ENCODE measurements at regions of chr10 and their contacts with region 1.

Region 1: DNA sequence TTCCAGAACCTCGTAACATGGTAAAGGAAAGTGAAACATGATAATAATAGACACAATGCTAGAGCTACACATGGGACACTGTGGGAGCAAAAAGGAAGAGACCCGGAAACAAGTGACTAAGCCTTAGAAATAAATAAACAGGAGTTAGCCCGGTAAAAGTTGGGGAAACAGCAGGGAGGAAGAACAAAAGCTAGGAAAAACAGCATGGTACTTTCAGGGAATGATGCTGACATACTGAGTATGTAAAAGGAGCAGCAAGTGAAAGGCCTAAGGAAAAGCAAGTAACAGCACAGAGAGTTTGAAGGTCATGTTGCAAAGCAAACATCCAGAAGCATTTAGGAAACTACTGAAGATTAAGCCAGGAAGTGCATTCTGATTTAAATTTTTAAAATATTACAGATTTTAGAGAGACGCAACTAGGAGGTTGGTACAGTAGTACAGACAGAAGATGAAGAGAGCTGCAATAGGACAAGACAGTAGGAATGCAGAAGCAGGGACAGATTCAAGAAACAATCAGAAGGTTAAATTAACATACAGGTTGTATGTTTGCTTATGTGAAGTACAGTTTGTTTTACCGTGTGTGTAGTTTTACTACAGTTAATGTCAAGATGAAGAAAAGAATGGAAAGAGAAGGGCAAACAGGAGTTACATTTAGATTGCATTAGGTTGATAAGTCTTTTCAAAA is 63.7 kb downstream of the ARHGAP12 start:
- DNase-seq: no peak

Region 2: DNA sequence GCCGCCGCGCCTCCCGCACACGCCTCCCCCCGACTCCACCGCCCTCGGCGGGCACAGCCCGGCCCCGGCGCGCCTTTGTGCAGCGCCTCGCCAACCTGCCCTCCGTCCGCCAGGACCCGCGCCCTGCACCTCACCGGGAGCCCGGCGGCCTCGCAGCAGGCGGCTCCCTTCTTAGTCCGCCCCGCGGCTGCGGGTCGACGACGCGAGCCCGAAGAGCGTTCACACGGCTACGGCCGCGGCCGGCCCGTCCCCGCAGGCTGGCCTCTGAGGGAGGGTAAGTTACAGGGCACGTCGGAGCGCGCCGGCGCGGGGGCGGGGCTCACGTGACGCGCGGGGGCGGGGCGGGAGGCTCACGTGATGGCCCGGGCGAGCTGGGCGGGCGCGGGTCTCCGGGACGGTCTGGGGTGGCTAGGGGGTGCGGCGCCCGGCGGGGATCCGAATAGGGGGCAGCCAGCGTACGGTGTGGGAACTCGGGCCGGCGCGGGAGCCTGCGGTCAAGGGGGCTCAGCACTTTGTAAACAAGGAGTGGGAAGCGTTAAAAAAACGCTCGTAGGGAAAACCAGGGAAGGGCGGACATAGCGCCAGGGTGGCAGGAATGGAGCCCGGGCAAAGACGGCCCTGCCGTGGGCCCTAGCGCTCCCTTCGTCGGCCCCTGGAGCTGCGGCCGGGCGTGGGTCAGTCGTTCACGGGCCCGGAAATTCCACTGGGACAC is 63.7 kb after region 1 on chr10 and contains the start of gene ARHGAP12:
- intact Hi-C with region 1: loop called (anchors 2 kb)
- DNase-seq: peak; percentile 75 to 97 (median 82)

Region 3: DNA sequence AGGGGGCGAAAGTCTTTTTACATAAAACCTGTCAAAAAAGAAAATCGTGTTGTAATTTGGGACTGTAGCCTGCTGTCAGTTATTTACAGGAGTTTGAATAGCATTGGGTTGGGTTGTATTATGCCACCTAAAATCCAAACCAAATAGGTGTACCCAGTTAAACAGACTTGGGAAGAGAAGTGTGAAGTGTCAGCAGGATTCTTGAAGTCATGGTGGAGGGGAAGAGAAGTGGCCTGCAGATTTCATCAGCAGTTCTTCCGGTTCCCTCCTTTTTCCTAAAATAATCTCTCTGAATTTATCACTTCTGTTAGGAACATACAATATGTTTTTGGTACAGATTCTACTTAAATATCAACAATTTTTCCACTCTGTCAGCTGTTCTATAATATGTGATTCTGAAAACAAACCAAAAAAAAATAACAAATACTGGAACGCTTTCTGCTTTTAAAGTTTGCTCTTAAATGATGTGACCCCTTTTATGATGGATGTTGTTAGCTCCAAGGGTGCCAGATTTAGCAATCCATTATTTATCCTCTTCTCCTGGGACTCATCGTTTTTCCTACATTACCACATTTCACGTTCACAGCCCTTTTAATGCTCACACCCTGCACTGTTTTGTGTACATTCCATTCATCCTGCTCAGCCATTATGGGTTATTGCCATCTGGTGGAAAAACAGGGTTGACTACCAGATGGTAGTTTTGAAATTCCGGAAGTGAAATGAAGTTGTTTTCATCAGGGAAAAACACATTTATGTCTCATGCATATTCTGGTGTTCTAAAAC is 82.4 kb after region 1 on chr10:
- intact Hi-C with region 1: loop called (anchors 5 kb)
- DNase-seq: no peak

Region 4: DNA sequence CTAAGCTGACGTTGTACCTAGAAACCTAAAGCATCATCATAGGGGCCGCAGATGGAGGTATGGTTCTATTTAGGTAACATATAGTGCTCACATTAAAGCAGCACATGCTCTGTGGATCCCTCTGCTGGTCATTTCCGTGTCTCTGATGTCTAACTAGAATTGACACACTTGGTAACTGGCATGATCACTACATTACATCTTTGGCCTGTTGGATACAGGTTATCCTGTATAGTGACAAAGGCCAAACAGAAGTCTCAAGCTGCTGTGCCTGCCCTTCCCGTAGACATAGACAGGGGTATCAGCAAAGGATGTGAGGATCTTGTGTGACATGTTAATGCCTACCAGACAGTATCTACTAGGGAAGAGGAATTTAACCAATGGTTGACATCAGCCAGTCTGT is 140.1 kb after region 1 on chr10:
- intact Hi-C with region 1: loop called (anchors 10 kb)
- DNase-seq: peak in 3 of 10 donors; percentile 17 to 29 (median 21)

Region 5: DNA sequence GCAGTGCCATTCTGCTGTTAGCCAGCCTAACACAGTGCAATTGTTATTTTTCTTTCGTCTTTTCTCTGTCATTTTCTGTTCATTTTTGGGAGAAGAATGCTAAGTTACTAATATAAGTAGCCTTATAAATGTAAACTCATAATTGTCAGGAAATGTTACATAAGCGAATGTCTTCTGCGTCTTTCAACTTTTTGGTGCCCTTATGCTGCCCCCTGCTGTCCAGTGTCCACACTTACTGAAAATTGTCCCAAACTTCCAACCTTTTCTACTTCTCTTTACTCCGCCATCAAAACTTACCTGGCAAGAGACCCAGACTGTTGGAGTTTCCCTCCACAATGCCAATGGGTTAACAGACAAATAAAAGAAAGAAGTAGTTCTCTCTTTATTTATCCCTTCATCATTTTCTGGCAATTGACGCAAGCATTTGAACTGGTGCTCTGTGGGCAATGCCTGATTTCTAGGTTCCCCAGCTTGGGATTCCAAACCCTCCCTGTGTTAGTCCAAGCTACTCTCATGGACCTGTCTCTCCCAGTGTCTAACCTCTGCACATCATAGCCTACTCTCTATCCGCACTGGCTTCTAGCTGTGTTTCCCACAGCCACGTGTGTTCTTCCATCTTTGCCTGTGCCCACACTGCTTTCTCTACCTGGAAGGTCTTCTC is 502.9 kb after region 1 on chr10:
- intact Hi-C with region 1: loop called (anchors 10 kb)
- DNase-seq: peak in 8 of 10 donors; percentile 32 to 92 (median 71)